Activated CD8-positive, alpha-beta memory T cell treated with anti-CD3 and anti-CD28 coated beads, Interleukin-2, amount 10 ng/mL, durations not matched to agents 7 days and 5 days (primary cell): ENCODE measurements at regions of chr19 and their contacts with region 1.

Region 1: GRCh38 chr19:11924886-11925650 is at the start of gene ZNF700:
- DNase-seq: peak; percentile 97
- ATAC-seq: peak; percentile 92
- H3K4me3 Mint-ChIP-seq: peak within 1 kb of the TSS; percentile 98
- H3K27ac Mint-ChIP-seq: peak within 1 kb of the TSS; percentile 99
- H3K4me1 Mint-ChIP-seq: peaks cover 29% of the 10 kb centered on the region
- H3K27me3 Mint-ChIP-seq: no peaks in the 10 kb centered on the region
- total RNA-seq, gene ZNF700: 16.9 to 24.1 TPM

Region 2: DNA sequence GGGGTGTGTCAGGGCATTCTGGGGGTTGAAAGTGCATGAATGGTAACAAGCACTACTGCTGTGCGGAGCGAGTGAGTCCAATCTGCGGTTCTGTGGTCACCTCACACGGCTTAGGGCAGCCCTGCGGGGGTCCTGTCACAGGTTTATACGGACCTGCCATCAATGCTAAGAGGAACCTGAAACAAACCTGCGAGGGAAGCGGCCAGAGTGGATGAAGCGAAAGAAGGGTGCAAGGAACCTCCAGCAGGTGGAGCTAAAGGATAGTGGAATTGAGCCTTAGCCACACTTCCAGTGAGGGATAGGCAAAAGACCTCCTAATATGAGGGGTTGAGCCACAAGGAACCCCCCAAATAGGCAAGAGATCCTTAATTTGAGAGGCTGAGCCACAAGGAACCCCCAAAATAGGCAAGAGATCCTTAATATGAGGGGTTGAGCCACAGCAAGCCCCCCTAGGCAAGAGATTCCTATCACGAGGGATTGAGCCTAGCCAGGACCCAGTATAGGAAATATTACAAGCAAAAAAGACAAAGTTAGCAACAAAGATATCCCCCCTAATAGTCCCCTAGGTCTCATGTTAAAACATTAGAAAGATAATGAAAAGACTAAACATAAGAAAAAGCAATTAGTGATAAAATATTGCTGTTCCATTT is 43.8 kb before region 1 on chr19:
- CTCF ChIA-PET with region 1: interaction called, 27 read pairs
- DNase-seq: peak; percentile 74
- ATAC-seq: peak; percentile 80
- H3K4me3 Mint-ChIP-seq: no peak overlapping the region
- H3K27ac Mint-ChIP-seq: no peak overlapping the region
- H3K4me1 Mint-ChIP-seq: peaks cover 2% of the 10 kb centered on the region
- H3K27me3 Mint-ChIP-seq: peaks cover 4% of the 10 kb centered on the region

Region 3: DNA sequence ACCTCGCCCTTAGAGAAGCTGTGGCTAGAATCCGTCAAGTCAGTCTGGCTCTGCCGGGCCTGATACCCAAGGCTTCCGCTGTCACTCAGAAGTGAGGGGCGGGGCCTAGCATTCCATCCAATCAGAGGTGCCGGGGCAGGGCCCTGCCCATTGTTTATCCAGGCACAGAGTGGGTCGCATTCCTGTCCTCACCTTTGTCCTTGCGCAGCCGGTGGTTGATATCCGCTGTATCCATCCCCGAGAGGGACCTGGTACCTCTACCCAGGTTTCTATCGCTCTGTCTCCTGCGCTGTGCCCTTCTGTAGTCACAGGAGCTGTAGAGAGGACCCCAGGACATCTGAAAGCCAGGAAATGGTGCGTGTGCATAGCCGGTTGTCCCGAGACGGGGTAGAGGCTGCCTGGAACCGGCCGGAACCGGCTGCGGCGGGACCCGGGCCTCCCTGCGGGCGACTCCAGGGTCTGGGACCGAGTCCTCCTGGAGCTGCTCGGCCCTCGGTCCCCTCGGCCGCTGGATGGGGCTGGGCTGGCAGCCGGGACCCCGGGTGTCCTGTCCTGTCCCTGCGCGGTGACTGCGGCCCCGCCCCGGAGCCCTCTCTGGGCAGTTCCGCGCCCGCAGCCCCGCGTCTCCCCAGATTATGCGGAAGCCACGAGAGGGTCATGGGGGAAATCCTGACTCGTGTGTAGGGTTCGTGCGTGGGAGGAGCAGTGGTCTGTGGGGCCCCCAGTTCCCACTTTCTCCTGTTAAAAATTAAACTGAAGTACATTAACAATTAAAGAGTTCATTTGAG is 40.0 kb after region 1 on chr19 and contains the start of gene ZNF763:
- CTCF ChIA-PET with region 1: interaction called, 46 read pairs
- DNase-seq: peak; percentile 95
- ATAC-seq: peak; percentile 97
- H3K4me3 Mint-ChIP-seq: peak within 1 kb of the TSS; percentile 86
- H3K27ac Mint-ChIP-seq: peak within 1 kb of the TSS; percentile 90
- H3K4me1 Mint-ChIP-seq: peaks cover 22% of the 10 kb centered on the region
- H3K27me3 Mint-ChIP-seq: no peaks in the 10 kb centered on the region
- total RNA-seq, gene ZNF763: 0.85 to 0.98 TPM

Region 4: DNA sequence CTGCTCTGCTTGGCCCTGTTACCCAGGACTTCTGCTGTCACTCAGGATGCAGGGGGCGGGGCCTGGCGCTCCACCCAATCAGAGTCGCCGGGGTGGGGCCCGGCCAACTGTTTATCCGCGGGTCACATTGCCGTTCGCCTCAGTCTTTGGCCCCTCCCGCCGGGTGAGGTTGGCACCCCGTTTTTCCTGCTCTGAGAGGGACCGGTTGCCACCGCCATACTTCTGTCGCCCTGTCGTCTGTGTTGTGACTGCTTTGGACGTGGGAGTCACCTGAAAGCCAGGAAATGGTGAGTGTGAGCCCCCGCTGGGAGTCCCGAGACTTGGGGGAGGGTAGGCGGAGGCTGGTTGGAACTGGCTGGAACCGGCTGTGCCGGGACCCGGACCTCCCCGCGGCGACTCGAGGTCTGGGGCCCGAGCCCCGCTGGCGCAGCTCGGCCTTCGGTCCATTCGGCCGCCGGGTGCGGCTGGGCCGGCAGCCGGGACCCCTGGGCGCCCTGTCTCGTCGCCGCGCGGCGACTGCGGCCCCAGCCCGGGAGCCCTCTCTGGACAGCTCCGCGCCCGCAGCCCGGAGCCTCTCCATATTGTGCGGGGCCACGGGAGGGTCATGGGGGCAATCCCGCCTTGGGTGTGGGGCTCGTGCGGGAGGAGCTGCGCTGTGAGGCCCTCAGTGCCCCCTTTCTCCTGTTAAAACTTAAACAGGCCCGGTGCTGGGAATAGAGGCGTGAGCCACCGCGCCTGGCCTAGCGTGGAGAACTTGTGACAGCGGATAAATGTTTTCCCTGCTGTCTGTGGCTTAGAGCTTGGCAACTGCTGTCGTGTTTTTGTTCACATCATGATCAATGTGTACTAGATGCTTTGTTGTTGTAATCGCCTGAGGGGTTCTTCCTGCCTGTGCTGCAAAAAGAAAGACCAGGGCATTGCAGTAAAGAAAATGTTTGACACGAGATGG is 139.8 kb after region 1 on chr19 and contains the start of gene ZNF844:
- CTCF ChIA-PET with region 1: interaction called, 12 read pairs
- DNase-seq: peak; percentile 76
- ATAC-seq: peak; percentile 84
- H3K4me3 Mint-ChIP-seq: peak within 1 kb of the TSS; percentile 72
- H3K27ac Mint-ChIP-seq: peak within 1 kb of the TSS; percentile 76
- H3K4me1 Mint-ChIP-seq: peaks cover 8% of the 10 kb centered on the region
- H3K27me3 Mint-ChIP-seq: no peaks in the 10 kb centered on the region
- total RNA-seq, gene ZNF844: 1.3 to 1.5 TPM

Region 5: GRCh38 chr19:12139885-12140547 is 214.9 kb after region 1 on chr19 and contains the start of gene ZNF20:
- CTCF ChIA-PET with region 1: interaction called, 45 read pairs
- DNase-seq: peak; percentile 95
- ATAC-seq: peak; percentile 97
- H3K4me3 Mint-ChIP-seq: peak within 1 kb of the TSS; percentile 91
- H3K27ac Mint-ChIP-seq: peak within 1 kb of the TSS; percentile 84
- H3K4me1 Mint-ChIP-seq: peaks cover 28% of the 10 kb centered on the region
- H3K27me3 Mint-ChIP-seq: no peaks in the 10 kb centered on the region
- total RNA-seq, gene ZNF20: 3.7 to 5.2 TPM

Region 6: GRCh38 chr19:12162882-12163806 is 238.1 kb after region 1 on chr19 and contains the start of gene ZNF136:
- CTCF ChIA-PET with region 1: interaction called, 18 read pairs
- DNase-seq: peak; percentile 98
- ATAC-seq: peak; percentile 100
- H3K4me3 Mint-ChIP-seq: peak within 1 kb of the TSS; percentile 98
- H3K27ac Mint-ChIP-seq: peak within 1 kb of the TSS; percentile 97
- H3K4me1 Mint-ChIP-seq: peaks cover 34% of the 10 kb centered on the region
- H3K27me3 Mint-ChIP-seq: no peaks in the 10 kb centered on the region
- total RNA-seq, gene ZNF136: 11.3 to 12.9 TPM